GM10248 (cell line): ENCODE measurements at regions of chr1 and their contacts with region 1.

Region 1: GRCh38 chr1:109131059-109131458 is 17.1 kb downstream of the ELAPOR1 start:
- DNase-seq: no peak
- CTCF ChIP-seq: no peak

Region 2: DNA sequence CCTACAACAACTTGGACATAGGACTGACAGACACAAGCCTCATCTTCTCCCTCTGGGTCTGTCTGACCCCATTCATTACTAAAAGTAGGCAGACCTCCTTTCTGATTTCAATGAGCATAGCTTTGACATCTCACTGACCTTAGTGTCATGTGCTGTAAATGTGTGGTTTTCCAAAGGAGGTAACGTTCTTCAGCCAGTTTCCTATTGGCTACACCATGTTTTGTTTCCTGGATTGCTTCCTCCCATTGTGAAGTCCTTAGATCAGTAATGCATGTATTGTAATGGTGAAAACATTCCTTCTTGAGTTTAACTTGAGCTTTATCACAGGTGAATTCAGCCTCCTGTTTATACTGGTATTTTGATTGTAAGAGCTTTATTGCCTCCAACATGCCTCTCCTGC is 363.9 kb before region 1 on chr1:
- CTCF ChIA-PET with region 1: no interaction called
- POLR2A ChIA-PET with region 1: no interaction called
- DNase-seq: no peak
- CTCF ChIP-seq: no peak

Region 3: GRCh38 chr1:109120356-109120755 is 10.7 kb before region 1 on chr1:
- CTCF ChIA-PET with region 1: interaction called, 14 read pairs
- POLR2A ChIA-PET with region 1: no interaction called
- DNase-seq: no peak
- CTCF ChIP-seq: no peak